Activated CD8-positive, alpha-beta T cell treated with anti-CD3 and anti-CD28 coated beads for 36 hours (primary cell): ENCODE measurements at regions of chr11 and their contacts with region 1.

Region 1: GRCh38 chr11:93225662-93226061 is 27.9 kb upstream of the SLC36A4 start:
- DNase-seq: no peak
- ATAC-seq: no peak
- H3K4me3 Mint-ChIP-seq: no peak overlapping the region
- H3K27ac Mint-ChIP-seq: no peak overlapping the region
- H3K4me1 Mint-ChIP-seq: no peaks in the 10 kb centered on the region
- H3K27me3 Mint-ChIP-seq: no peaks in the 10 kb centered on the region
- CTCF ChIP-seq: peak; percentile 35

Region 2: DNA sequence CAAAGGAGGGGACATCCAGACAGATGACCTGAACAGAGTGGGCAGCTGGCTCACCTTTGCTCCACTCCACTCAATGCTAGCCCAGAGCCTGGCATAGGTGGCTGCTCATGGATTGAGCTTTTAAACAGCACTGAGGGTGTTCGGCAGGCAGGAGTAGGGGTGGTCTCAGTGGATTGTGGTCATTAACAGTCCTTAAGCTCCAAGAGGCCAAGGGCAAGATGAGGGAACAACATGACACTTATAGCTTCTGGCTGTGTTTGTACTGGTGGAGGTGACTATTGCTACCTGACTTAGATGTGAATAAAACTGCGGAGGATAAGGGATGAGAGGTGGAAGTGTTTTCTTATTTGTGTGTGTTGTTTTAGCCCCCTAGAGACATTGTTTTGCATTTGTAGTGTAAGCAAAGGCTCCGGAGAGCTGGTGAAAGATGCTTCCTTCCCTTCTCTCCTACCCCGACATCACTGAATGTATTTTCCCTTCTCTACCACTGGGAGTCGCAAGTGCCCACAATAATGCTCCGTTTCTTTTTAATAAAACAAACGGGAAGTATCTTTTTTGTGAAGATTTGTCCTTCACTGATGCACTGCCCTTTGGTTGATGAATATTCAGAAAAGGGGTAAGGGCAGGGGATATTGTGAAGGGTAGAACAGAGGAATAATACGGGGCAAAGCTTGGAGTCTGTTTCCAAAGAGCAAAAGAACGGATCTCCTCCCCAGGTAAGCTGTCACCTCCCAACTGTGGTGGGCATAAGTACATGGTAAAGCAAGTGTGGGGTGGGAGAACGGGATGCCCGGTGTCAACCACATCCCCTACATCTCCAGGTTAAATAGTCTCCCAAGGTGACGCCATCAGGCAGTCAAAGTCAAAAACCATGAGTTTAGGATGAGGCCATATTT is 283.7 kb before region 1 on chr11:
- CTCF ChIA-PET with region 1: interaction called, 50 read pairs
- POLR2A ChIA-PET with region 1: no interaction called
- intact Hi-C with region 1: loop called (anchors 5 kb)
- DNase-seq: peak; percentile 23
- ATAC-seq: no peak
- H3K4me3 Mint-ChIP-seq: no peak overlapping the region
- H3K27ac Mint-ChIP-seq: no peak overlapping the region
- H3K4me1 Mint-ChIP-seq: no peaks in the 10 kb centered on the region
- H3K27me3 Mint-ChIP-seq: peaks cover 9% of the 10 kb centered on the region
- CTCF ChIP-seq: peak; percentile 71